ENCODE measurements at regions of chr13 and their contacts with region 1.

Region 1: GRCh38 chr13:31236211-31236786 is 36.5 kb downstream of the B3GLCT start:
- DNase-seq: peak in 1 of 2 experiments; percentile 26
- ATAC-seq: peak in 1 of 2 experiments; percentile 66; a peak in 3 of 6 replicates
- H3K4me3 ChIP-seq: no peak overlapping the region
- H3K27ac ChIP-seq: no peak overlapping the region
- H3K4me1 ChIP-seq: no peaks in the 10 kb centered on the region
- CTCF ChIP-seq: peak; percentile 62
- EP300 ChIP-seq: no peak
- POLR2A ChIP-seq: no peak
- RAD21 ChIP-seq: peak; percentile 64

Region 2: DNA sequence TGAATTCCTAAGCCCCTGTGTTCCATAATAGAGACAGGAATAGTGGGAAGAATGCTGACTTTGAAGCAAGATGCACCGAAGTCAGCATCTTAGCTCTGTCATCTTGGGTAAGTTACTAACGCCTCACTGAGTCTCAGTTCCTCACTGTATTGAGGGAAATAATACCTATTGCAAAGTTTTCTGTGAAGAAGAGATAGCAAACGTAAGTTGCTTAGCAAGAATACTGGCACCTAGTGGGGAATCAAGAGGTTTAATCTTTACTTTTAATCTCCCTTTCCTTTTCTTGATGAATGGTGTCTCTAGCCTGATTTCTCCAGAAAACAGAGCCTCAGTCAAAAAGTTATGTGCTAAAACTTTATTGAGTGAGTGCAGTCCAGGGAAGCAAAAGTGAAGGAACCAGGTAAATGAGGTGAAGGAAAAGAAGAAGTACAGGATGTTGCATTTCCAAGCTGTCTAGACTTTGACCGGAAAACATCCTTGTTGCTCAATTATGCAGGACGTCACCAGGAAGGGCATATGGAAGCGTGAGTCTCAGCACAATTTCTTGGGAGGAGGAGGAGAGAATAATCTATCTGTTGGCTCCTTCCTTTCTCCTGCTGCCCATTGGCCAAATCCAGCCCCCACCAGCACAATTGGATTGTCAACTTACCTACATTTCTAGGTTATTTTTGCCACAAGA is 173.5 kb after region 1 on chr13:
- CTCF ChIA-PET with region 1: interaction called, 10 read pairs
- POLR2A ChIA-PET with region 1: no interaction called
- DNase-seq: no peak
- ATAC-seq: no peak
- H3K4me3 ChIP-seq: no peak overlapping the region
- H3K27ac ChIP-seq: no peak overlapping the region
- H3K4me1 ChIP-seq: no peaks in the 10 kb centered on the region
- CTCF ChIP-seq: no peak
- EP300 ChIP-seq: no peak
- POLR2A ChIP-seq: no peak
- RAD21 ChIP-seq: no peak